Right ventricle myocardium superior (tissue), 1 donor: ENCODE measurements at regions of chr6 and their contacts with region 1.

Region 1: DNA sequence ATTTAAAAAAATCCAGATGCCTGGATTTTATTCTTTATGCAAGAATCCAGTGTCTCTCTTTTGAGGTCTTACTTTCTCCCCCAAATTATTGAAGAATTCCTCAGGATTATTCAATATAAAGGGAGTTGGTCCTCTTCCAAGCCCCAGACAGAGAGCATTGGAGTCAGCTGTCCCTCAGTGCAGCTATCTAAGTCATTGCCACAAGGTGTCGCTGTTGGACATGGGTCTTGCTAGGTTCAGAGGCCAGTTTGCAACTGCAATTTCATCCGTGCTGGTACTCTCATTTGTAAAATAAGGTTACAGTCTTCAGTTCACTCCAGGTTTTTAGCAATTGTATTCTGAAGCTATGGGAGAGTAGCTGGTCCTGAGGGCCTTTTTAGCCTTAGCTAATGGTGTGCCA is 27.8 kb downstream of the CCN2 start:
- DNase-seq: no peak
- ATAC-seq: peak; percentile 57

Region 2: GRCh38 chr6:132161283-132161682 is 237.9 kb after region 1 on chr6:
- intact Hi-C with region 1: loop called (anchors 5 kb)
- DNase-seq: no peak
- ATAC-seq: no peak

Region 3: DNA sequence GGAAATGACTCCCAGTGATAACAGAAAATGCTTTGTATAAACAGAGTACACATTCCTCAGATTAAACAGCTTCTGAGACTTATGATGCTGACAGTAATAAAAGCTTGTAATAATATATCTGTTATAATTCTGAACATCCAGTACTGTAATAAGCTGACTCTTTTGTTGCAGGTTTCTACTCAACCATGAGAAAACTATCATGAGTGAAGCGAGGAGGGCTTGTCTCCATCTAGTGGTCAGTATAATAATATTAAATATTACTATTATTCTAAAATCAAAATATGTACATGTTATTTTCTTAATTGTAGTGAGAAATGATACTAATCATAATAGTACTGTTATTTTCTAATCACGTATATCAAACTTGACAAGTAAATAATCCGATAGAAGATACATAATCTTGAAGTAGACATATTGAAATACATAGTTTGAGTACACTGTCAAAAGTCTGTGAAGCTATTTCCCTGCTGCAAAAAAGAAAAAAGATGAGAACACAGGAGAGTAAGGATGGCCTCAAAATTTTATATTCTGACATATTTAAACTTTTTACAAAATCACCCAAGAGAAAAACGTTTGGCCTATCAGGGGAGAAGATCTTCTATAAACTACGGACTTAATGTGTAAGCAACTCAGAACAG is 294.8 kb after region 1 on chr6:
- intact Hi-C with region 1: loop called (anchors 5 kb)
- DNase-seq: no peak
- ATAC-seq: peak; percentile 38